ENCODE measurements at regions of chr11 and their contacts with region 1.

Region 1: DNA sequence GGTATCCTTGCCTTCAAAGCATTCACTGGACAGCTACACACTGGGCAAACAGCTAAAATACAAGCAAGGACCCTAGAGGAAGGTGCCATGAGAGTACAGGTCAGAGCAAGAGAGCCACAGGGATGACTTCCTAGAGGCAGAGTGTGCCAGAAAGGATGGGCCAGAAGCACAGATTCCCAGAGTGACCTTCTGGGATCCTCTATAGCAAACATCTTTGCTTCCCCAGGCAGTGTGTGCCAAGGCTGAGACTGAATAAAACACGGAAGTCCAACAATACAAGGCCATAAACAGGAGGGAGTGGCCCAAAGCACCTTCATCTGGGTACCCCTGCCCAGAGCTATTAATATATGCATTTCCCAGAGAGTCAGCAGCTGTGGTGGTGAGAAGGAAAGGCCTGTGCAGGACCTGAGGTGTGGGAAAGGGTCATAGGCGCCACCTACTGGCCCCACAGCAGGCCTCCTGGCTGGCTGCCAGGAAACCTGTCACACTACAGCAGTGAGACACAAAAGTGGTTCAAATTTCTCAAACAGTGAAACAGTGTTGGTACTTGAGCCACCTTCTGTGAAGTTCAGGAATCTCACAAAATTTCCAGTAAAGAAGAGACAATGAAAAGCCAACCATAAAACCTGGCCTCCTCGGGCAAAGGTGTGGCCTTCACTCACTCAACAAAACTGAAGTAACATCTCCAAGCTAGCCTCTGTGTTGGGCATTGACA is 20.3 kb downstream of the CLPB start:
- DNase-seq: peak; percentile 84
- H3K4me3 ChIP-seq: no peak overlapping the region
- H3K27ac ChIP-seq: no peak overlapping the region
- H3K4me1 ChIP-seq: peaks cover 21% of the 10 kb centered on the region
- CTCF ChIP-seq: peak; percentile 95

Region 2: GRCh38 chr11:72293910-72294615 is 120.0 kb before region 1 on chr11:
- CTCF ChIA-PET with region 1: no interaction called
- POLR2A ChIA-PET with region 1: interaction called, 4 read pairs
- intact Hi-C with region 1: loop called (anchors 2 kb)
- DNase-seq: no peak
- H3K4me3 ChIP-seq: no peak overlapping the region
- H3K27ac ChIP-seq: no peak overlapping the region
- H3K4me1 ChIP-seq: no peaks in the 10 kb centered on the region
- CTCF ChIP-seq: no peak

Region 3: DNA sequence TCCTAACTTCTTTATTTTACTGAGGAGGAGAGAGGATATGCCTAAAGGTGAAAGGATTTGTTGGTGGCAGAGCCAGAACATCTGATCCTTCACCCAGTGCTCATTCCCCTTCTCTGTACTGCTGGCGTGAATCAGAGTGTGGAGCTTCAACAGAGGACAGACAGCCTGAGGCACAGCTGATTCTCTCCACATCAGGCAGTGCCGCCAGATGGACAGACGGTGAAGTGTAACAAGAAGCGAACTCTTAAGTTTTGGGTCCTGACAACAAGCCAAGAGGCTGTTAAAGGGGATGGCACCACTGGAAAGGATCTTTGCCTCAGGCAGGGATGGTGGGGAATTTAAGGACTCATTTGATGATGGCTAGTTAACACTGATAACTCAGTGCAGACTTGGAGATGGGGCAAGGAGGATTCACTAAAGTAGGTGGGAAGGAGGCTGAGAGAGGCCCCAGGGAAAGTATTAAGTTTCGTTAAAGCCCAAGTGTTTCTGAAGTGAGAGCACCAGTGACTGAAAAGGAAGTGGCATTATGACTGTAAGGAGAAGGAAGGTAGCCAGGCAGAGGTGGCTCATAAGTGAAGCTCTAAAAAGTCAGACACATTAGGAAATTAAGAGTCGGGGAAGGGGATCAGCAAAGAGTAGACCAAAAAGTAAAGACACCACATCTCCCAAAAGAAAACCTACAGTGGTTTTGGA is 61.1 kb before region 1 on chr11:
- CTCF ChIA-PET with region 1: no interaction called
- POLR2A ChIA-PET with region 1: interaction called, 3 read pairs
- intact Hi-C with region 1: loop called (anchors 5 kb)
- DNase-seq: no peak
- H3K4me3 ChIP-seq: no peak overlapping the region
- H3K27ac ChIP-seq: no peak overlapping the region
- H3K4me1 ChIP-seq: no peaks in the 10 kb centered on the region
- CTCF ChIP-seq: no peak